MCF 10A (cell line): ENCODE measurements at regions of chr3 and their contacts with region 1.

Region 1: DNA sequence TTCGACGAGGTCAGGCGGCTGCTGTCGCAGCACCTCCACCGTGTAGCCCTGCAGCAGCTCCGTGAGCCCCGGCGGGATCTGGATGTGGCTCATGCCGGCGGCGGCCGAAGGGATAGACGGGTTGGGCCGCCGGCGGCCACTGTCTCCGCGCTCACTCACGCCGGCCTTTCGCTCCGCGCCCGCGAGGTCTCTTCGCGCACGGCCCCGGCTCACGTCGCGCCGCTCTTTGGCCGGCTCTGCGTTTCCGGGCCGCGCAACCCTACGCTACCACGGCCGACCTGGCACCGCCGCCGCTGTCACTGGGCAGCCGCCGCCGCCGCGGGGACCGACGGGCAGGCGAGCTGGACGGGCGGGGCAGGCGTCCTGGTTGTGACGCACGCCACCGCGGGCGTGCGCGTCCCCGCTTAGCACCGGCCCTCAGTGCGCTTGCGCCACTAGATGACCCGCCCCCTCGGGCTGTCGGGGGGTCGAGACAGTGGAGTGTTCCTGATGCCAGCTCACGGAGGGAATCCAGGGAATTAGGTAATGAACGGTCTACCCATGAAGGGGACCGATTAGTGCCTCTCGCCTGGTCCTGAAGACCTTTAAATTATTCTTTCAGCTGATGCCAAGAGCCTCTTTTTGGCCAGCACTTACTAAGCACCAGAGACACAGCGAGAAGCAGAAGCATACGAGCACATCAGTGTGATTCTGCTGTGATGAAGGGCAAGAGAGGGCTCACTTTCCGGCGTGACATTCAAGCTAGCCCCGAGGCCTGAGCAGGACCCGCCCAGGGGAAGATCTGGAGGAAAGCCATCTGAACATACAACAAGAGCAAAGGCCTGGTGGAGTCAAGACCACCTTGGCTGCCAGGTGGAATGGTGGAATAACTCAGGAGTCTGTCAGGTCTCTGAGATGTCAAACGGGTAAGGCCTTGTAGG is at the start of gene PRKAR2A:
- DNase-seq: peak; percentile 85
- H3K4me3 Mint-ChIP-seq: peak within 1 kb of the TSS; percentile 87
- H3K27ac Mint-ChIP-seq: peak within 1 kb of the TSS; percentile 93
- H3K4me1 Mint-ChIP-seq: peaks cover 13% of the 10 kb centered on the region
- H3K27me3 Mint-ChIP-seq: no peaks in the 10 kb centered on the region
- CTCF ChIP-seq: no peak
- total RNA-seq, gene PRKAR2A: 51.3 and 61.3 TPM in 2 replicates

Region 2: GRCh38 chr3:48635222-48636021 is 212.3 kb before region 1 on chr3 and contains the start of gene SLC26A6:
- CTCF ChIA-PET with region 1: no interaction called
- POLR2A ChIA-PET with region 1: no interaction called
- intact Hi-C with region 1: no loop called
- DNase-seq: peak; percentile 98
- H3K4me3 Mint-ChIP-seq: peak within 1 kb of the TSS; percentile 84
- H3K27ac Mint-ChIP-seq: peak within 1 kb of the TSS; percentile 85
- H3K4me1 Mint-ChIP-seq: peaks cover 10% of the 10 kb centered on the region
- H3K27me3 Mint-ChIP-seq: no peaks in the 10 kb centered on the region
- CTCF ChIP-seq: peak; percentile 48
- total RNA-seq, gene SLC26A6: 47.4 and 63.3 TPM in 2 replicates

Region 3: DNA sequence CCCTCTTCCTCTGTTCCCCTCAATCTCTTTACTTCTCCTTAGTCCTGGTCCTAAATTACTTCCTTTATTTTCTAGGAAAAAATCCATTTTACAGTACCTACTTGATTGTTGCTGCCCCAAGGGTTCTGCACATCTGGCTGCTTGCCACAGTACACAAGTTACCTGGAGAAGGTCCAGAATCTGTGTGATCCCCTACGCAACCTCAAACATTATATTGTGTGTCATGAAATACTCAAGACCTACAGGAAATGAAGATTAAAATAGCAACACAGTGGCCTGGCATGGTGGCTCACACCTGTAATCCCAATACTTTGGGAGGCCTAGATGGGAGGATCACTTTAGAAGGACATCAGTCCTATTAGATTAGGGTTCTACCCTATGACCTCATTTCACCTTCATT is 48.8 kb before region 1 on chr3:
- CTCF ChIA-PET with region 1: no interaction called
- POLR2A ChIA-PET with region 1: no interaction called
- intact Hi-C with region 1: loop called (anchors 10 kb)
- DNase-seq: peak; percentile 87
- H3K4me3 Mint-ChIP-seq: no peak overlapping the region
- H3K27ac Mint-ChIP-seq: peak overlapping the region; percentile 59
- H3K4me1 Mint-ChIP-seq: peaks cover 16% of the 10 kb centered on the region
- H3K27me3 Mint-ChIP-seq: no peaks in the 10 kb centered on the region
- CTCF ChIP-seq: no peak

Region 4: DNA sequence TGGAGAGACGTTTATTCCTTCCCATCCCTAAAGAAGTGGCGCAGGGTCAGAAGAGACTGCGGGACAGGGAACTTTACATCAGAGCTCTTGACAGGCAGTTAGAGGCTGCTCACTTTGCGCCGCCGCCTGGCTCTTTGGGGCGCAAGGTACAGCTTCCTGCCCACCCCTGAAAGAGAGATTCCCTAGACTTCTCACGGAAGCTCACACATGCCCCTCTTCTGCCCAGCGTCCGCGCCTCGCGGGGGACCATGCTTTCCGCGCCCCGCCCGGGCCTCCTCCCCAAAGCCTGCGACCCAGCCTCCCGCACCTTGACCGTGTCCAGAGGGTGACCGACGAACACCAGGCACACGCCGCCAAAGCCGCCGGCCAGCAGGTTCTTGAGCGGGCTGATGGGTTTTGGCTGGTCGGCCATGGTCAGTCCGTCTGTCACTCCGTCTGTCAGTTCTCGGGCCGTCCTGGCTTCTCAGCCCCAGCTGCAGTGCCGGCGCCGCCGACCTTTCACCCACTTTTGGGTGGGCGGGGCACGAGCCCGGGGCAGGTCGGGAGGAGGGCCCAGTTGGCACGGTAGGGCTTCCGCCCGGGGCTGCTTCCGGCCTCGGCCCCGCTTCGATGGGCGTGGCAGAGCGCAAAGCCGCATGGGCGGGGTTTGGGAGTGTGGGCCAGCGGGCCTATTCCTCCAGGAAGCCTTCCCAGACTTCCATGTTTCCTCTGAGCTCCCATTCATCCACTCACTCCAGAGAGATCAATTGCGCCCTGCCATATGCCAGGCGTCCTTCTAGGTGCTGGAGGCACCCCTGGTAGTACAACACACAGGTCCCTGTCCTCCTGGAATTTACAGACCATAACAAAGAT is 50.8 kb after region 1 on chr3 and contains the start of gene SLC25A20:
- CTCF ChIA-PET with region 1: no interaction called
- POLR2A ChIA-PET with region 1: interaction called, 23 read pairs
- intact Hi-C with region 1: loop called (anchors 1 kb)
- DNase-seq: peak; percentile 91
- H3K4me3 Mint-ChIP-seq: peak within 1 kb of the TSS; percentile 90
- H3K27ac Mint-ChIP-seq: peak within 1 kb of the TSS; percentile 90
- H3K4me1 Mint-ChIP-seq: peaks cover 20% of the 10 kb centered on the region
- H3K27me3 Mint-ChIP-seq: no peaks in the 10 kb centered on the region
- CTCF ChIP-seq: no peak
- total RNA-seq, gene SLC25A20: 9.2 and 11.5 TPM in 2 replicates